Head of caudate nucleus (tissue), 42 donors: ENCODE measurements at regions of chr17 and their contacts with region 1.

Region 1: DNA sequence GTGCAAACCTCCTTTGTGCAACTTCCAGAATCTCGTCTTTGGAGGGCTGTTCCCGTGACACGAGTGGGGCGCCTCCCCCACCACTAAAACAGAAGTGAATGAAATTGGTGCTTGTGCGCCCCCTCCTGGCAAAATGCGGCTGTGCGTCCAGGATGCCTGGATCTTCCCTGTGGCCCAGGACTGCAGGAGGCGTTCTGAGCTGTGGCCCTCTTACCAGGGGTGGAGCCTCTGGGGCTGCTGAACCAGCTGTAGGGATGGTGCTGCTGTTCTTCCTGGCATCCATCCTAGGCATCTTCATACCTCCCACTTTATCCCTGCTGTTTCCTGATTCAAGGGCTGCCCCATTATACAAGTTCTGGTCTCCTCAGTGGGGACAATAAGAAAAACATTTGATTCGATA is 18.5 kb upstream of the NAGLU start:
- DNase-seq: peak; percentile 55 to 92 (median 83)

Region 2: GRCh38 chr17:42312285-42313130 is 205.0 kb before region 1 on chr17:
- intact Hi-C with region 1: loop called (anchors 10 kb)
- DNase-seq: peak; percentile 77 to 94 (median 88)

Region 3: DNA sequence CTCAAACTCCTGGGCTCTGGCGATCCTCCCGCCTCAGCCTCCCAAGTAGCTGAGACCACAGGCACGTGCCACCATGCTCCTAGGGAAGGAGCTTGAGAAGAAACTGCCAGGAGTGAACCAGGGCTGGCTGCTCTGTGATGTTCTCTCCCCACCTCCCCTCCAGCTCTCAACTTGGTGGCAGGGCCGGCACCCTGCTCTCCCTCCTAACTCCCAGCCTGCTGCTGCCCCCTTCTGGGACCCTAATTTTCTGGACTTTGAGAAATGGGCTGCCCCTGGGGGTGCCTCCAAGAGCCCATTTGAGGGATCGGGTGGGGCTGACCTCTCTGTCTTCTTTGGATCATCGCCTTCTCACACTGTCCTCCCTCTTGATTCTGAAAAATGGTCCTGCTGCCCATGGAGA is 114.4 kb before region 1 on chr17:
- intact Hi-C with region 1: no loop called
- DNase-seq: peak in 1 of 42 donors; percentile 67

Region 4: DNA sequence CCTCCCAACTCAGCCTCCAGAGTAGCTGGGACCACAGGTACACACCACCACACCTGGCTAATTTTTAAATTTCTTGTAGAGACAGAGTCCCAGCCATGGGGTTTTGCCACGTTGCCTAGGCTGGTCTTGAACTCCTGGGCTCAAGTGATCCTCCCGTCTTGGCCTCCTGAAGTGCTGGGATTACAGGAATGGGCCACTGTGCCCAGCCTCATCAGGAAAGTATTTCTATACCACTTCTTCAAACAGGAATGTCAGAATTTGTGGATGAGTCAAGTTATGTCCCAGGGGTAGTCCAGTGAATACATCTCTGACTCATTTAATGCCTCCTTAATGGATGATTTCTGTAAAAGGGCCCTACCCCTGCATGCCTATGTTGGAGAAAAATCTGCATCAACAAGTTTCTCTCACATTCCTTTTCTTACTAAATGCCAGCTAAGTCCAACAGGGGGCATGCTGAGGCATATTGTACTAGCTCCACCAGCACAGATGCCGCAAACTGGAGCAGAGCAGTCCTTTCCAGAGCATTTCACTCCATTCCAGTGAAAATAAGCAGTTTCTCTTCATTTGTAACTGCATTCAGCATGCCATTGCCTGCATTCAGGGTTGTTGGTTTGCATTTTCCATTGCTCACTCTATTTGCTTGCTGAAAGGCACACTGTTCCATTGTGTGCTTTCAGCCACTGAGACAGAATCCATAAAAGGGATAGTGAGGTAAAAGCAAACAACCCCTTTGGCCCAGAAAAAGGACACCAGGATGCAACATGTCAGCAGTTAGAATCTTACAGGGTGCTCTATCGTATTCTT is 89.2 kb before region 1 on chr17:
- intact Hi-C with region 1: loop called (anchors 10 kb)
- DNase-seq: peak in 39 of 42 donors; percentile 40 to 90 (median 69)